ENCODE measurements at regions of chr6 and their contacts with region 1.

Region 1: DNA sequence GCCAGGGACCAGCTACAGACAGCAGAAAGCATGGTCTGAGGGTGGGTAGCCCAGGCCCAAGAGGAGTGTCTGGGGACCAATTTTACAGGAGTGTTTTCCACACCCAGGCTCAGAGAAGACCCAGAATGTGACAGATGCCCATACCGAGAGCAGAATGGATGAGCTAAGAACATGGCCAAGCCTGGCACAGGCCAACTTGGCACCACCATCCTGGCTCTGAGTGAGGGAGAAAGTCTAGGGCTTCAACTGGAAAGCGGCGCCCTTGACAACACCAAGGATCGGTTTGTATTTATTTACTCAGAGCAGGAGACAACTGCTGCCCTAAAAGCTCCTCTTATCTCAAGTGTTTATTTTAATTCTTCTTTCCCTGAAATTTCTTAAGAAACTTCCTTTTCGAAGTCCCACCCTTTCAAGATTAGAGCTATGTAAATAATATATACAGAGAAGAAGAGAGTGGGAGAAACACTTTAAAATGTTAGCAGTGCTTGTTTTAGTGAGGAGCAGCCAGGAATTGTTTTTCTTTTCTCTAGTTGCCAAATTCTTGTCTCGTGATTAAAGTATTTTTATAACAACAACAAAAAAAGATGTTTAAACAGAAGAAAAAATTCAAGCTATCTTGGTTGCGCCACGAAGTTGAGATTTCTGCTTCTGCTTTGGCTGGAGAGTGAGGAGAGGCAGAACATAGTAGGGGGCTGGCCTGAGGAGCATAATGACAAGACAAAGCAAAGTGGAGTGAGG is 16.2 kb downstream of the TNXB start:
- DNase-seq: peak; percentile 56 to 79 (median 68)
- H3K4me3 ChIP-seq: no peak overlapping the region
- H3K27ac ChIP-seq: peak overlapping the region; percentile 33 to 72
- H3K4me1 ChIP-seq: peaks cover 20% of the 10 kb centered on the region
- H3K27me3 ChIP-seq: no peaks in the 10 kb centered on the region
- CTCF ChIP-seq: no peak
- EP300 ChIP-seq: no peak
- POLR2A ChIP-seq: no peak

Region 2: GRCh38 chr6:32107406-32107805 is 14.5 kb after region 1 on chr6:
- intact Hi-C with region 1: loop called in 1 of 4 experiments (anchors 2 kb)
- DNase-seq: peak in 2 of 5 donors; percentile 52 to 60
- H3K4me3 ChIP-seq: peak overlapping the region; percentile 43
- H3K27ac ChIP-seq: peak overlapping the region; percentile 78 to 81
- H3K4me1 ChIP-seq: peaks cover 36% of the 10 kb centered on the region
- H3K27me3 ChIP-seq: no peaks in the 10 kb centered on the region
- CTCF ChIP-seq: no peak
- EP300 ChIP-seq: no peak
- POLR2A ChIP-seq: no peak